BJ (cell line): ENCODE measurements at regions of chr19 and their contacts with region 1.

Region 1: GRCh38 chr19:44055870-44056269 is 4.0 kb downstream of the ZNF223 start:
- DNase-seq: no peak
- H3K4me3 ChIP-seq: no peak overlapping the region
- H3K27me3 ChIP-seq: no peaks in the 10 kb centered on the region
- CTCF ChIP-seq: no peak

Region 2: GRCh38 chr19:43950834-43951645 is 104.8 kb before region 1 on chr19 and contains the start of gene ZNF221:
- CTCF ChIA-PET with region 1: no interaction called
- POLR2A ChIA-PET with region 1: interaction called, 12 read pairs
- DNase-seq: peak; percentile 94
- H3K4me3 ChIP-seq: peak within 1 kb of the TSS; percentile 56
- H3K27me3 ChIP-seq: no peaks in the 10 kb centered on the region
- CTCF ChIP-seq: peak; percentile 38; the same call in 1 of the 2 replicates
- polyA plus RNA-seq, gene ZNF221: 0.64 and 1.2 TPM in 2 replicates

Region 3: DNA sequence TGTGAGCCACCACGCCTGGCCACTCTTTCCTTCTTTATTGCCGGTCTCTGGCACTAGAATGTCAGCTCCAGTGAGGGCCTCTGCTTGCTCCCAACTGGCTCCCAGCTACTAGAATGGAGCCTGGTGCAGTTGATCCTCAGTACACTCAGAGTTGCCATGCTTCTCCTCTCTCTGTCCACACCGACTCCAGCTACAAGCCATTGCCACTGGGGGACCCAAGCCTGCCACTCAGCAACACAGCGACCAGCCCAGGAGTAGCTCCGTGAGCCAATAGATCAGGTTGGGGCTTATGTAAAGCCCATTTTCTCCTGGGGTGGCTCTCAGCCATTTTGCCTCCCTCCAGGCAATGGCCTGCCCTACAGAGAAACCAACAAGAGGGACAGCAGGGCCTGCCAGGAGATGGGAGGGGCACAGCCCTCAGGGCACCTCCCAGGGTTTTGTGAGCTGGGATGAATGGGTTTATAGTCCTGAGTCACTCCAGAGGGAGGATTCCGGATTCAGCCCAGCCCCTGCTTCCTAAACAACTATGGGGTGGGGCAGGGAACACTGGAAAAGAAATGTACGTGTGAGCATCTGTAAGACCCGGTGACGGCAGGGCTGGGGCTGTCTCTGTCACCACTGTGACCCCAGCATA is 1492.2 kb after region 1 on chr19:
- CTCF ChIA-PET with region 1: no interaction called
- POLR2A ChIA-PET with region 1: no interaction called
- DNase-seq: peak; percentile 66
- H3K4me3 ChIP-seq: no peak overlapping the region
- H3K27me3 ChIP-seq: no peaks in the 10 kb centered on the region
- CTCF ChIP-seq: no peak